ENCODE measurements at regions of chr20 and their contacts with region 1.

Region 1: GRCh38 chr20:59571551-59572314 is 32.6 kb upstream of the PHACTR3 start:
- DNase-seq: peak; percentile 91
- H3K4me3 ChIP-seq: peak overlapping the region; percentile 41 to 58
- H3K27ac ChIP-seq: no peak overlapping the region
- H3K4me1 ChIP-seq: peaks cover 0 to 15% of the 10 kb centered on the region in 2 experiments; a peak in 1 of 4 replicates
- H3K27me3 ChIP-seq: no peaks in the 10 kb centered on the region
- CTCF ChIP-seq: peak; percentile 93
- EP300 ChIP-seq: no peak
- RAD21 ChIP-seq: peak; percentile 68

Region 2: GRCh38 chr20:59412875-59413284 is 158.9 kb before region 1 on chr20:
- CTCF ChIA-PET with region 1: no interaction called
- POLR2A ChIA-PET with region 1: no interaction called
- DNase-seq: peak; percentile 46
- H3K4me3 ChIP-seq: no peak overlapping the region
- H3K27ac ChIP-seq: peak overlapping the region in 1 of 2 experiments; percentile 80; a peak in 2 of 4 replicates
- H3K4me1 ChIP-seq: peaks cover 0 to 27% of the 10 kb centered on the region in 2 experiments; a peak in 1 of 4 replicates
- H3K27me3 ChIP-seq: 0 out of 2 replicates have a peak, but pooled peaks cover 7% of the 10 kb centered on the region
- CTCF ChIP-seq: no peak
- EP300 ChIP-seq: no peak
- RAD21 ChIP-seq: peak; percentile 64

Region 3: GRCh38 chr20:59525500-59526241 is 46.1 kb before region 1 on chr20:
- CTCF ChIA-PET with region 1: interaction called, 11 read pairs
- POLR2A ChIA-PET with region 1: no interaction called
- DNase-seq: peak; percentile 83
- H3K4me3 ChIP-seq: peak overlapping the region in 1 of 2 experiments; percentile 14; a peak in 2 of 4 replicates
- H3K27ac ChIP-seq: no peak overlapping the region
- H3K4me1 ChIP-seq: peaks cover 0 to 9% of the 10 kb centered on the region in 2 experiments; a peak in 1 of 4 replicates
- H3K27me3 ChIP-seq: no peaks in the 10 kb centered on the region
- CTCF ChIP-seq: peak; percentile 82
- EP300 ChIP-seq: no peak
- RAD21 ChIP-seq: peak; percentile 79

Region 4: GRCh38 chr20:59583428-59584045 is 11.8 kb after region 1 on chr20:
- CTCF ChIA-PET with region 1: interaction called, 59 read pairs
- POLR2A ChIA-PET with region 1: no interaction called
- DNase-seq: no peak
- H3K4me3 ChIP-seq: no peak overlapping the region
- H3K27ac ChIP-seq: no peak overlapping the region
- H3K4me1 ChIP-seq: peaks cover 0 to 14% of the 10 kb centered on the region in 2 experiments; a peak in 3 of 4 replicates
- H3K27me3 ChIP-seq: no peaks in the 10 kb centered on the region
- CTCF ChIP-seq: no peak
- EP300 ChIP-seq: no peak
- RAD21 ChIP-seq: no peak

Region 5: DNA sequence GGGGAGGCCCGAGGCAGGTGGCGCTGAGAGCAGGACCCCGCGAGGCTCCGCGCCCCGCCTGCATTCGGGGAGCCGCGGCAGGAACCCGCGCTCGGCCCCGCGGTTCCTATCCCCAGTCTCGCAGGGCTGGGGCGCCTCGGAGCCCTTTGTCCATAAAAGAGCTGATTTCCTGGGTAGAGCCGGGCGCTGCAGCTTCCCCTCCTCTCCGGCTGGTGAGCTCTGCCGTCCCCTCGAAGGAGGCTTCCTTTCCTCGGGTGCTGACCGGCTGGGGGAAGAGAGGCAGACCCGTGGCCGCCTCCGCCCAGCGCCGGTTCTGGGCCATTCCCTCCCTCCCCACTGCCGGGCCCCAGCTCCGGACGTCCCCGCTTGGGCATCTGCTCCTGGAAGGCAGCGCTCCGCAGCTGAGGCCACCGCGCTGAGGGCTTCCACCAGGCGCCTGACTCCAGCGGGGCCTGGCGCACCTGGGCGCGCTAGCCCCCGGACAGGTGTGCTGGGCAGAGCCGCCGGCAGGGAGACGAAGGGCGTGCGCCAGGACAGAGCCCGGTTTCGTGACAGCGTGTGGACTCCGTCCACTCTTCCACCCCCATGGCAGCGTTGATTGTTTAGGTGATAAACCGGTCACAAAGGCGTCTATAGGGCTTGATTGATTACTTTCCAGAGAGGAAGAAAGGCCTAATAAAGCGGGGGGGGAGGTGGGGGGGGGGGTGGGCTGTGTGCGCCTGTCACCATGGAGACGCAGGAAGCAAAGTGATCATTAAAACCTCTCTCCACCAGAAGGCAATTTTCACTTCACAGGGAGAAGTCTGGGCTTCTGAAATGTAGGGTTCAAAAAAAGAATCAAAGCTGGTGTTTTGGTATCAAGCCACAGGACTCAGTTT is 33.7 kb after region 1 on chr20:
- CTCF ChIA-PET with region 1: interaction called, 17 read pairs
- POLR2A ChIA-PET with region 1: no interaction called
- DNase-seq: peak; percentile 84
- H3K4me3 ChIP-seq: peak overlapping the region in 1 of 2 experiments; percentile 47; a peak in 2 of 4 replicates
- H3K27ac ChIP-seq: peak overlapping the region in 1 of 2 experiments; percentile 50; a peak in 2 of 4 replicates
- H3K4me1 ChIP-seq: peaks cover 0 to 3% of the 10 kb centered on the region in 2 experiments; a peak in 1 of 4 replicates
- H3K27me3 ChIP-seq: peaks cover 16% of the 10 kb centered on the region
- CTCF ChIP-seq: no peak
- EP300 ChIP-seq: no peak
- RAD21 ChIP-seq: no peak

Region 6: DNA sequence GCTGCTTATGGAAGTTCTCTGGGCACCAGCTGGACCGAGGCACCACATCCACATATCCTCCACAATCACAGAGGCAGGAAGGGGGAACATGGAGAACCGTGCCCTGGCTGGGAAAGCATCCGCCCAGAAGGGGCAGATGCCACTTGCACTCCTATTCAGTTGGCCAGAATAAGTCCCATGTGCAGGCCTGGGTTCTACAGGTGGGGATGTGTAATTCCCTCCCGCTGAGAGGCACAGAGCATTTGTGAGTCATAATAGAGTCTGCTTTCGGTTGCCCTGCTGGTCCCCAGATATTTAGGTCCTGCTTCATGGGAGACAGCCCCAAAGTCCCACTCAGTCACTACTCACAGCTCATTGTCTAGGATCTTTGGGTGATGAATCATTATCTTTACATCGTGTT is 136.6 kb after region 1 on chr20:
- CTCF ChIA-PET with region 1: no interaction called
- POLR2A ChIA-PET with region 1: no interaction called
- DNase-seq: no peak
- H3K4me3 ChIP-seq: no peak overlapping the region
- H3K27ac ChIP-seq: no peak overlapping the region
- H3K4me1 ChIP-seq: no peaks in the 10 kb centered on the region; a peak in 1 of 4 replicates
- H3K27me3 ChIP-seq: no peaks in the 10 kb centered on the region
- CTCF ChIP-seq: no peak
- EP300 ChIP-seq: no peak
- RAD21 ChIP-seq: no peak

Region 7: DNA sequence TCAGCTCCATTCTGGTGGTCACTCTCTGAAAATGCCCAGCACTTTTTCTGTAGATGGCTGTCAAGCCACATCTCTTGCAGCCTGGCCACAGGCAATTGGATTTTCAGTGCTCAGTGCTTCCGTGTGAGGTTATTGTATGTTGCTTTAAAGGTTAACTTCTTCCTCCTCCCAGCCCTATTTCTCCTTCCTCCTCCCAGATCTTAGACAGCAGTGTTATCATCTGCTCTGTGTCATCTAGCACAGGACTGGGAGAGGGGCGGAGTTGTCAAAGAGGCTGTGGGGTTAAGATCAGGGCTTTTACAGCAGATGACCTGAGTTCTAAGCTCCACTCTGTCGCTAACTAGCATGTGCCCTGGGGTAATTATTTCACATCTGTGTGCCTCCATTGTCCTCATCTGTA is 161.6 kb after region 1 on chr20:
- CTCF ChIA-PET with region 1: interaction called, 15 read pairs
- POLR2A ChIA-PET with region 1: no interaction called
- DNase-seq: no peak
- H3K4me3 ChIP-seq: no peak overlapping the region
- H3K27ac ChIP-seq: no peak overlapping the region
- H3K4me1 ChIP-seq: peaks cover 0 to 12% of the 10 kb centered on the region in 2 experiments; a peak in 2 of 4 replicates
- H3K27me3 ChIP-seq: no peaks in the 10 kb centered on the region
- CTCF ChIP-seq: no peak
- EP300 ChIP-seq: no peak
- RAD21 ChIP-seq: no peak

Region 8: GRCh38 chr20:59756241-59756640 is 184.5 kb after region 1 on chr20:
- CTCF ChIA-PET with region 1: interaction called, 62 read pairs
- POLR2A ChIA-PET with region 1: no interaction called
- DNase-seq: no peak
- H3K4me3 ChIP-seq: no peak overlapping the region
- H3K27ac ChIP-seq: no peak overlapping the region
- H3K4me1 ChIP-seq: peaks cover 0 to 3% of the 10 kb centered on the region in 2 experiments; a peak in 1 of 4 replicates
- H3K27me3 ChIP-seq: no peaks in the 10 kb centered on the region
- CTCF ChIP-seq: no peak
- EP300 ChIP-seq: no peak
- RAD21 ChIP-seq: no peak

Measured in SK-N-SH (cell line).